SK-N-SH (cell line): ENCODE measurements at regions of chr2 and their contacts with region 1.

Region 1: DNA sequence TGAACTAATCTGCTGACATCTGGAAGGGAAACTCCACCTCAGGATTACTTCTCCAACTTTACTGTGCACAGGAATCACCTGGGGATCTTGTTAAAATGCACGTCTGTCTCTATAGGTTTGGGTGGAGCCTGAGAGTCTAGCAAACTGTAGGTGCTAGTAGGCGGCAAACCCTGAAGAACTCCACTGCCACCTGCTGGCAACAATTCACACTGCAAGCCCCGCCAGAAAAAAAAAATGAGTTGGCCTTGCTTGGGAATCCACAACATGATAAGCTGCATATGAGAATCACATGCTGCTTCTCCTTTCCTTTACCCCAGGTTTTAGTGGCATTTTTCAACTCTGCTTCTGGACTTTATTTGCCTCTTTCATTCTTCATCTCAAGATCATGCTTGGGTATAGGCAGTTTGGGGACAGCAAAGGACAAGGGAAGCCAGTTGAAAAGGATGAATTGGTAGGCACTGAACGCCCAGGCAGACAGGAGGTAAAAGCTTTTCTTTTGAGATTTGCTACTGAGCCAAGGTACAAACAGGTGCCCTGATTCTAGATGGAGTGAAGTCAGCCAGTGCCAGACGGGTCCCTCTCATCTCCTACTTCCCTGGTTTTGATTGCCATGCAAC is 88.8 kb downstream of the VIT start:
- DNase-seq: peak; percentile 72
- H3K4me3 ChIP-seq: peak overlapping the region in 1 of 2 experiments; percentile 15; a peak in 1 of 4 replicates
- H3K27ac ChIP-seq: no peak overlapping the region
- H3K4me1 ChIP-seq: no peaks in the 10 kb centered on the region
- H3K27me3 ChIP-seq: peaks cover 10% of the 10 kb centered on the region; the same call in 1 of the 2 replicates
- CTCF ChIP-seq: peak; percentile 99
- EP300 ChIP-seq: no peak
- RAD21 ChIP-seq: peak; percentile 84

Region 2: GRCh38 chr2:36088716-36089328 is 696.5 kb before region 1 on chr2:
- CTCF ChIA-PET with region 1: no interaction called
- POLR2A ChIA-PET with region 1: no interaction called
- DNase-seq: no peak
- H3K4me3 ChIP-seq: no peak overlapping the region
- H3K27ac ChIP-seq: no peak overlapping the region
- H3K4me1 ChIP-seq: no peaks in the 10 kb centered on the region
- H3K27me3 ChIP-seq: no peaks in the 10 kb centered on the region
- CTCF ChIP-seq: no peak
- EP300 ChIP-seq: no peak
- RAD21 ChIP-seq: no peak

Region 3: DNA sequence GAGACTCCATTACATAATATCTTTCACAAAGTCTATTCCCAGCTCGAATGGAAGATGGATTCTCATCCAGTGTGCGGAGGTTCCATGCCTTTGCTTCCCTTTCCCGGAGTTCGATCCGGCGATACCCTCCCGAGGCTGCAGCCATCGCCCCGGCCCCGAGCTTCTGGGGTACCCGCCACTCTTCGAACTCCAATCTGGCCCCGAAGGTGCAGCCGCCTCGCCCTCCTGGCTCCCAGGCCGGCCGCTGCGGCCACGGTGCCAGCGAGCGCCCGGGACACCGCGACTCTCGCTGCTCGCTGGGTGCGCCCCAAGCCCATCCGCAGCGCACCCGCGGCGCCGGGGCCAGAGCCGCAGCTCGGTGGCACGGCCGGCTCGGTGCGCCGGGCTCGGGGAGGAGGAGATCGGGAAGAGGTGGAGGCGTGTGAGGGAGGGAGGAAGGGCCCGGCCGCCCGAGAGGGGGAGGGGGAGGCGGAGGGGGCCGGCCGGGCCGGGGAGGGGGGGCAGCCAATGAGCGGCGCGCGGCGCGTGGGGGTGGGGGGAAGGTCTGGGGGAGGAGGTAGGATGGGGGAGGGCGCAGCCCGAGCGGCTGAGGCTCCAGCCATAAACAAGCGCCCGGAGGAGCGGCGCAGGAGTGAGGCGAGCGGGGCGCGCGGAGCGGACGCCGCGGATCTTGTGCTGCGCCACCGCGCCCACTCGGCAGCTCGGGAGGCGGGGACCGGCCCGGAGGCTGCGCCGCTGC is 430.0 kb before region 1 on chr2 and contains the start of gene CRIM1:
- CTCF ChIA-PET with region 1: interaction called, 38 read pairs
- POLR2A ChIA-PET with region 1: no interaction called
- DNase-seq: peak; percentile 82
- H3K4me3 ChIP-seq: peak within 1 kb of the TSS; percentile 80 to 91
- H3K27ac ChIP-seq: peak within 1 kb of the TSS; percentile 55 to 96
- H3K4me1 ChIP-seq: peaks cover 2 to 17% of the 10 kb centered on the region in 2 experiments
- H3K27me3 ChIP-seq: no peaks in the 10 kb centered on the region
- CTCF ChIP-seq: no peak
- EP300 ChIP-seq: peak in 1 of 2 experiments; percentile 12; a peak in 1 of 4 replicates
- RAD21 ChIP-seq: no peak
- polyA plus RNA-seq, gene CRIM1: 228 and 244 TPM in 2 replicates

Region 4: DNA sequence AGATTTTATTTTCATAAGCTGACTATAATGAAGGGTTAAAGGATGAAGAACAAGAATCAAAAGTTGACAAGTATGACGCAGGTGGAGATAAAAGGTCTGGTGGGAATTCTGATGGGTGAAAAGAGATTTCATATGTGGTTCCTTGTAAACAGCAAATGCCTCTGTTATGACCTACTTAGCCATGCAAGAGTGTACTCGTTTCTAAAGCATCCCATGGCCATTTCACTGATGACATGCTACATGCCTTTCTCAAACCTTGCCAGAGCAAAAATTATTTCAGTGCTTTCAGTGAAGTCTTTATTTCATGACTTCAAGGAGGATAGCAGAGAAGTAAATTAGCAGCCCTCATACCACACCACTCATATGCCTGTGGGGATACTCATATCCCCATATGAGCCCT is 259.1 kb before region 1 on chr2:
- CTCF ChIA-PET with region 1: no interaction called
- POLR2A ChIA-PET with region 1: no interaction called
- DNase-seq: no peak
- H3K4me3 ChIP-seq: no peak overlapping the region
- H3K27ac ChIP-seq: peak overlapping the region in 1 of 2 experiments; percentile 10; a peak in 2 of 4 replicates
- H3K4me1 ChIP-seq: peaks cover 0 to 20% of the 10 kb centered on the region in 2 experiments; a peak in 2 of 4 replicates
- H3K27me3 ChIP-seq: no peaks in the 10 kb centered on the region
- CTCF ChIP-seq: no peak
- EP300 ChIP-seq: no peak
- RAD21 ChIP-seq: no peak

Region 5: DNA sequence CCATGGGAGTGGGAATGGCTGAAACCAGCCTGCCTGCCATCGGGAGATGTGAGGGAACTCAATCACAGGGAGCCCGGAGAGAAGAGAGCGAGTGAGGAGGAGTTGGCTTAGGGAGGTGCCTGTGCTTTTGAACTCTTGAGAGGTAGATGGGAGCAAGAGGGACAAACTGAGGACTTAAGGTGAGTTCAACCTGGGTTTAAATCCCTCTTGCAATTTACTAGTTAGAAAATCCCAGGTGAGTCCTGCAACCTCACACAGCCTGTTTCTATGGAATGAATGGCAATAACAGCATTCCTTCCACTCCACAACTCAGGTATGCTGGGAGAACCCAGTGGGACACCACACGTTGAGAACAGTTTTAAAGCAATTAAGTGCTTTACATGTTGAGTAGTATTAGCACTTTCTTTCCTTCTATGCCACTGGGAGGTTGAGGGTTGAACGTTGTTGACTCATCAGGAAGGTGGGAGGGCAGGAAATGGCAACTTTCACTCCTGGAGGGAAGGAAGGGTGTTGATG is 31.5 kb before region 1 on chr2:
- CTCF ChIA-PET with region 1: interaction called, 11 read pairs
- POLR2A ChIA-PET with region 1: no interaction called
- DNase-seq: no peak
- H3K4me3 ChIP-seq: no peak overlapping the region
- H3K27ac ChIP-seq: no peak overlapping the region
- H3K4me1 ChIP-seq: no peaks in the 10 kb centered on the region
- H3K27me3 ChIP-seq: peaks cover 19% of the 10 kb centered on the region; the same call in 1 of the 2 replicates
- CTCF ChIP-seq: no peak
- EP300 ChIP-seq: no peak
- RAD21 ChIP-seq: no peak

Region 6: DNA sequence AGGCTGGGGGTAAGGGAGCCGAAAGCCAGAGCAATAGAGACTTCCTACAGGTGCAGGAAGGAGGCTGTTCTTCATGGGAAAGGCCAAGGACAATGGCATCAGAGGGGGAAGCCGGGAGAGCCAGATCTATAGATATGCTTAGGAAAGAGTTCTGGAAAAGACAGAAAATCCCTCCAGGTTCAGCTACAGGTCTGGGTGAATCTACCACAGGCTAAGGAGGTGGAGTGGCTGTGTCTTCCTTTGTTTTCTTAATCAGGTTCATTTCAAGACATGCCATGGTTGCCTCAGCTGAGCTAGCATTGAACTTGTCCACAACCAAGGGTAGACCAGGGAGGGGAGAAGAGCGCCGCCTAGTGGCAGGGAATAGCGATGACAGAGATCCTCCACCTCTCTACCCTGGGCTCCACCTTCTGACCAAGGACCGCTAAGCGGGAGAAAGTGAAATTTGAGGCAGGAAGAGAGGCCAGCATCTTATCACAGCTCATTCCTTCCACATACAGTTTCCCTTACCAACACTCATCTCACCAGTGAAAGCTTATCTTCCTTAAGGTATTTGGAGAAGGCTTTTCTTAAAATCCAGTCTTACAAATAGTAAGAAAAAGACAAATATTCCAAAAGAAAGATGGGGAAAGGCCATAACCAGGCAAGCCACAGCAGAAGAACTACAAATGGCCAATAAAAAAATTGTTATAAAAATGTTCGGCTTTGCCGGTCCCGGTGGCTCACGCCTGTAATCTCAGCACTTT is 14.6 kb before region 1 on chr2:
- CTCF ChIA-PET with region 1: interaction called, 78 read pairs
- POLR2A ChIA-PET with region 1: no interaction called
- DNase-seq: peak; percentile 64
- H3K4me3 ChIP-seq: peak overlapping the region in 1 of 2 experiments; percentile 27; a peak in 1 of 4 replicates
- H3K27ac ChIP-seq: no peak overlapping the region
- H3K4me1 ChIP-seq: no peaks in the 10 kb centered on the region
- H3K27me3 ChIP-seq: no peaks in the 10 kb centered on the region; the same call in 1 of the 2 replicates
- CTCF ChIP-seq: peak; percentile 63
- EP300 ChIP-seq: no peak
- RAD21 ChIP-seq: peak; percentile 53

Region 7: GRCh38 chr2:36800381-36800780 is 15.1 kb after region 1 on chr2:
- CTCF ChIA-PET with region 1: interaction called, 218 read pairs
- POLR2A ChIA-PET with region 1: no interaction called
- DNase-seq: no peak
- H3K4me3 ChIP-seq: no peak overlapping the region
- H3K27ac ChIP-seq: no peak overlapping the region
- H3K4me1 ChIP-seq: no peaks in the 10 kb centered on the region
- H3K27me3 ChIP-seq: peaks cover 12% of the 10 kb centered on the region; the same call in 1 of the 2 replicates
- CTCF ChIP-seq: no peak
- EP300 ChIP-seq: no peak
- RAD21 ChIP-seq: no peak

Region 8: GRCh38 chr2:36812196-36812595 is 26.9 kb after region 1 on chr2:
- CTCF ChIA-PET with region 1: interaction called, 31 read pairs
- POLR2A ChIA-PET with region 1: no interaction called
- DNase-seq: peak; percentile 53
- H3K4me3 ChIP-seq: no peak overlapping the region
- H3K27ac ChIP-seq: no peak overlapping the region
- H3K4me1 ChIP-seq: no peaks in the 10 kb centered on the region
- H3K27me3 ChIP-seq: no peaks in the 10 kb centered on the region
- CTCF ChIP-seq: peak; percentile 46
- EP300 ChIP-seq: no peak
- RAD21 ChIP-seq: peak; percentile 36; the same call in 1 of the 2 replicates